ENCODE measurements at regions of chr10 and their contacts with region 1.

Region 1: GRCh38 chr10:87531908-87532622 is 27.4 kb downstream of the MINPP1 start:
- DNase-seq: no peak
- H3K4me3 ChIP-seq: no peak overlapping the region
- H3K27ac ChIP-seq: no peak overlapping the region
- H3K4me1 ChIP-seq: no peaks in the 10 kb centered on the region
- H3K27me3 ChIP-seq: no peaks in the 10 kb centered on the region
- CTCF ChIP-seq: no peak

Region 2: GRCh38 chr10:86851329-86852207 is 680.5 kb before region 1 on chr10:
- CTCF ChIA-PET with region 1: no interaction called
- POLR2A ChIA-PET with region 1: no interaction called
- intact Hi-C with region 1: no loop called
- DNase-seq: peak; percentile 84
- H3K4me3 ChIP-seq: no peak overlapping the region
- H3K27ac ChIP-seq: peak overlapping the region; percentile 46
- H3K4me1 ChIP-seq: peaks cover 52% of the 10 kb centered on the region
- H3K27me3 ChIP-seq: no peaks in the 10 kb centered on the region
- CTCF ChIP-seq: no peak

Region 3: DNA sequence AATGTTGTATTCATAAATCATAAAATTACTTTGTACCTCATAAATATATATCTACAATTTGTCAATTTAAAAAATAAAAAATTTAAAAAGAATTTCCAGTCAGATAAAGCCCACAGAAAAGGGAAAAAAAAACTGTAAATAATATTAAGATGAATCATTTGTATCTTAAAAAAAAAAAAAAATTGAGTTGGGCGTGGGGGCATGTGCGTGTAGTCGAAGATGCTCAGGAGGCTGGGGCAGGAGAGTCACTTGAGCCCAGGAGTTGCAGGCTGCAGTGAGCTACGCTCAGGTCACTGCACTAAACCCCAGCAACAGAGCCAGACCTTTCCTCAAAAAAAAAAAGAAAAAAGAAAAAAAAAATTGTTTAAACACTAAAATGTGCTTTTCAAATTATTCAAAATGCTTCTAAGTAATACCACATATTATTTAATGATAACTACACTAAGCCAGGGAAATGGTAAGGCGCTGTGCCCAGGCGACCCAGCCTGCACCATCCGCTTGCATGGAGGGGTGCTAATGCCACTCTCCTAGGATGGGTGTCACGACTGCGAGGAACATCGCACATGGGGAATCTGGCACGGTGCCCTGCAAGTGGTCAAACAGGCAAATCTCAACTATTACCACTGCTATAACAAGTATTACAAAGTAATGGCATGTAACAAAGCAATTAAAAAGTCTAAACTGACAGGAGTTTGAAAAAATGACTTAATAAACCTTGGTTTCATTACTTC is 452.8 kb before region 1 on chr10:
- CTCF ChIA-PET with region 1: no interaction called
- POLR2A ChIA-PET with region 1: no interaction called
- intact Hi-C with region 1: no loop called
- DNase-seq: no peak
- H3K4me3 ChIP-seq: no peak overlapping the region
- H3K27ac ChIP-seq: no peak overlapping the region
- H3K4me1 ChIP-seq: peaks cover 17% of the 10 kb centered on the region
- H3K27me3 ChIP-seq: no peaks in the 10 kb centered on the region
- CTCF ChIP-seq: no peak

Region 4: DNA sequence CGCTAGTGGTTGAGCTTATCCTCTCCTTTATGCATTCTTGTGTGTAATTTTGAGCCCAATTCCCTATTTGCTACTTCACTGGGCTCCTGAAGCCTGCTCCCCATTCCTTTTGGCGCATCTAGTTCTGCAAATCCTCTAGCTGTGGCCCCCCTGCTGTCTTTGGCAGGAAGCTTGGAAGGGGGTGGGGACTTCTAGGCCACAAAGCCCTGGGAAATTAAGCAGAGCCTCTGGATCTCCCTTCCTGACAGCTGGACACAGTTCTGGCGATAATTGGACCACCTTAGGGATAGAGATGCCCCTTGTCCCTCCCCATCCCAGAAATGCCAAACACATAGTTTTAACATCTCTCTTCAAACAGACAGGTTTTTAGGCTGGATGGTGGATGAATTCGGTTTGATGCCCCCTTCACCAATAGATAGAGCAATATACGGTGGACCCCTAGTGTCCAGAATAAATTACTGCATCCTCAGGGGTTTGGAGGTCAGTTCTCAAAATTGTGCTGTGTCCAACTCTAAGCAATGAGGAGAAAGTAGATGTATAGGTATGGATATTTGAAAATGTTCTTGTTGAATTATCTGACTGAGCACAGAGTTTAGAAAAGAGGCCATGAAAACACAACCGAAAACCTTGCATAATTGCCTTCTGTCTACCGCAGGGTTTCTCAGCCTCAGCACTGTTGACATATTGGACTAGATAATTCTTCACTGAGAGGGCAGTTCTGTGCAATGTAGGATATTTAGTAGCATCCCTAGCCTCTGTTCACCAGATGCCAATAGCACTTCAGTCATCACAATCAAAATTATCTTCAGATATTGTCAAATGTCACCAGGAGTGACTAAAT is 203.1 kb after region 1 on chr10:
- CTCF ChIA-PET with region 1: no interaction called
- POLR2A ChIA-PET with region 1: no interaction called
- intact Hi-C with region 1: loop called (anchors 5 kb)
- DNase-seq: peak; percentile 87
- H3K4me3 ChIP-seq: peak overlapping the region; percentile 16
- H3K27ac ChIP-seq: no peak overlapping the region
- H3K4me1 ChIP-seq: peaks cover 6% of the 10 kb centered on the region
- H3K27me3 ChIP-seq: no peaks in the 10 kb centered on the region
- CTCF ChIP-seq: peak; percentile 77

Region 5: GRCh38 chr10:87771871-87772500 is 239.9 kb after region 1 on chr10:
- CTCF ChIA-PET with region 1: no interaction called
- POLR2A ChIA-PET with region 1: no interaction called
- intact Hi-C with region 1: loop called (anchors 2 kb)
- DNase-seq: peak; percentile 57
- H3K4me3 ChIP-seq: no peak overlapping the region
- H3K27ac ChIP-seq: no peak overlapping the region
- H3K4me1 ChIP-seq: peaks cover 14% of the 10 kb centered on the region
- H3K27me3 ChIP-seq: no peaks in the 10 kb centered on the region
- CTCF ChIP-seq: peak; percentile 69

Region 6: DNA sequence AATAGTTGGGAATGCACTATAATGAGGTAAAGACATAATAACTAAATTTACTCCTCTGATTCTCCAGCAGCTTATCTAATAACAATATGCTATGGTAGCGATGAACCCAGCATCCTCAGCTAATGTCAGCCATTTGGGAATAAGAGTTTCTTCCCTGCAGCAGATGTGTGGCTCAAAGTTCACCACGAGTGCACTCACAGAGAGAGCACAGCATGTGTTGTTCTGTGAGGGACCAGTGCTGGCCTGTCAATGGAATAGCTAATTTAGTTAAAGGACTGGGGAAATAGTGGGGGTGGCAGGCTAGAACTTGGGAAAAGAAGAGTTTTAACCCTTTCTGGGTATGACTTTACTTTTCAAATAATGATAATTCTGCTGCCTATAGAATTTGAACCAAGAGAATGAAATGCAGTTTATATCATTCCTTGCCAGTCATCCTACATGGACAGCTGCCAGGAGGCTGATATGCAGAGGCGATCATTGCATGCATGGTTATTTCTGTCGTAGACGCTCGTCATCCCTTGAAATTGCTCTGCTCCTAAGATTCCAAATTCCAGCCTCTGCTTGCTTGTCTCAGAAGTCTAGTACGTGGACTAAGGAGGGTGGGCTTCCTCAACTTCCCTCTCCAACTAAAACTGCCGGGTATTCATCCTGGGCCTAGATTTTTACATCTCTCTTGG is 695.4 kb after region 1 on chr10:
- CTCF ChIA-PET with region 1: no interaction called
- POLR2A ChIA-PET with region 1: interaction called, 10 read pairs
- intact Hi-C with region 1: no loop called
- DNase-seq: peak; percentile 11
- H3K4me3 ChIP-seq: no peak overlapping the region
- H3K27ac ChIP-seq: no peak overlapping the region
- H3K4me1 ChIP-seq: no peaks in the 10 kb centered on the region
- H3K27me3 ChIP-seq: no peaks in the 10 kb centered on the region
- CTCF ChIP-seq: no peak